Motor neuron (in vitro differentiated cells): ENCODE measurements at regions of chr9 and their contacts with region 1.

Region 1: DNA sequence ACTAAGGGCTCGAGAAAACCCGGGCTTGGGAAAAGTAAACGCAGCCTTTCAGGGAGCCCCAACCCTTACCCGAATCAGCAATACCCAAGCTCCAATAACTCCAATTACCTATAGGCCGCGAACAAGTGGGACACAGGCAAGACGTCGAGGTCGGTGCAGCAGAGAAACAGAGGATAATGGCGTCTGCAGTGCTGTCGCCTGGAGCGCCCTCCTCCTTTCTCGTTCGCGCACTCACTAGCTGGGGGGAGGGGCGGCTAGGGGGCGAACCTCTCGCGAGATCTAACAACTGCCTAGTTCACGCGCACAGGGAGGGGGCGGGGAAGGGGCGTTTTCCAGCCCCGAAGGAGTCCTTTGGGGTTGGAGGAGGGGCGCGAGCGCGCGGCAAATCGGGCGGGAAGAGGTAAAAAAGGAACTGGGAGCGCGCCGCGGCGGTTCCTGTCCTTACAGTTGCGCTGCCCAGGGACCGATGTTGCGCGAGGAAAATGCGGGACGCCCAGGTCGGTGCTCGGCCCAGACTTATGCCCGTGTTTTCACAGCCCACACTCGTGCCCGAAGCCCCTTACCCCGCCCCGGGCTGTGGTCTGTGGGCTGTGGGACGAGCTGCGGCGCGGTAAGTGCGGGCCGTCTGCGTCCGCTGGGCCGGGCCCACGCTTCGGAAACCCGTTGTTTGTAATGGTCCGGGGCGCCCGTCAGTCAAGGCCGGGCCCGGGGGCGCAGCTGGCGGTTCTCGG is at the start of gene RMI1:
- ATAC-seq: peak; percentile 78 to 86 (median 81)
- H3K4me3 ChIP-seq: peak within 1 kb of the TSS; percentile 54 to 77 (median 68)
- H3K27ac ChIP-seq: peak within 1 kb of the TSS; percentile 99
- H3K4me1 ChIP-seq: peaks cover 11 to 19% of the 10 kb centered on the region in 2 donors
- total RNA-seq, gene RMI1: 1.9 to 19.4 (median 7.6) TPM

Region 2: DNA sequence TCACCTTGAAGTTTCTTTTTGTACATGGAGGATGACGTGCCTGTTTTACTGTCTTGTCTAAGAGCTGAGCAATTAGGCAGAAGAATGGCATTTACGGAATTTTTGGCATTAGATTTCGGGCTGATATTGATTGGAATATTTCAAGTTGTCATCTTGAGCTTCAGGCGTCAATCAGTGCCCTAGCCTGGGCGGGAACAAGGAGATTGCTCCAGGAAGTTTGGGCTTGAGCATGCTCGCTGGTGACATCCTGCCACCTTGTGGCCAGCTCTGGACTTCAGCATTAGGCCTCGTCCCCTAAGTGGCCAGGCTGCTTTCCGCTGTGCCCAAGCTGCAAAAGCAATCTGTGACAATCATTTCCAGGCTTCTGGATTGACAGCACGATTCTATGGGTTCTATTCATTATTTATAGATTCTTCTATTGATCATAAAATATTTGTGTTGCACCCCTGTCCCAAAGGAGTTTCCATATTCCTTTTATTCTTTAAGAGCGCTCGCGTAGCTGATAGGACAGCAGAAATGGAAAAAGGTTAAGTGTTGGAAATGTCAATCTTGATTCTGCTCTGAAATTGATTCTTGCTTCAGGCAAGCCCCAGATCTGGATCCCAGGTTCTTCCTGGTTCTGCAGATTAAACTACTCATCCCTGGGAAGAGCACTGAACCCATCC is 280.7 kb after region 1 on chr9:
- in situ Hi-C with region 1: loop called in 1 of 9 experiments (anchors 25 kb)
- ATAC-seq: peak; percentile 84 to 94 (median 92)
- H3K4me3 ChIP-seq: no peak overlapping the region
- H3K27ac ChIP-seq: no peak overlapping the region
- H3K4me1 ChIP-seq: peaks cover 5 to 7% of the 10 kb centered on the region in 2 donors